ENCODE measurements at regions of chr6 and their contacts with region 1.

Region 1: GRCh38 chr6:90078513-90079289 is 184.4 kb downstream of the GJA10 start:
- DNase-seq: no peak

Region 2: DNA sequence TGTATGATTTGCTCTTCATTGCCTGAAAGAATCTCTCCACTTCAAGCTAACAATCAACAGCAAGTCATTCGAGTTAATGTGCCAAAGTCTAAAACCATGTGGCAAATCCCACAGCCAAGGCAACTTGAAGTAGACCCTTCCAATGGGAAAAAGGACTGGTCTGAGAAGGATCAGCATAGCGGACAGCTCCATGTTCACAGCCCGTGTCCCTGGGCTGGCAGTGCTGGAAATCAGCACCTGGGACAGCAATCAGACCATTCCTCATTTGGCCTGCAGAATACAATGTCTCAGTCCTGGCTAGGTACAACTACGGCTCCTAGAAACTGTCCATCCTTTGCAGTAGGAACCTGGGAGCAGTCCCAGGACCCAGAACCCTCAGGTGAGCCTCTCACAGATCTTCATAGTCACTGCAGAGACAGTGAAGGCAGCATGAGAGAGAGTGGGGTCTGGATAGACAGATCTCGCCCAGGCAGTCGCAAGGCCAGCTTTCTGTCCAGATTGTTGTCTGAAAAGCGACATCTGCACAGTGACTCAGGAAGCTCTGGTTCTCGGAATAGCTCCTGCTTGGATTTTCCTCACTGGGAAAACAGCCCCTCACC is 183.3 kb before region 1 on chr6:
- intact Hi-C with region 1: no loop called
- DNase-seq: no peak

Region 3: GRCh38 chr6:89984926-89985750 is 93.6 kb before region 1 on chr6:
- intact Hi-C with region 1: loop called (anchors 5 kb)
- DNase-seq: peak in 9 of 10 donors; percentile 68 to 97 (median 82)